Calu3 (cell line): ENCODE measurements at regions of chr4 and their contacts with region 1.

Region 1: GRCh38 chr4:40149960-40150385 is 46.9 kb upstream of the RHOH start:
- DNase-seq: peak; percentile 57
- H3K4me3 Mint-ChIP-seq: no peak overlapping the region
- H3K27ac Mint-ChIP-seq: no peak overlapping the region
- H3K4me1 Mint-ChIP-seq: no peaks in the 10 kb centered on the region
- H3K27me3 Mint-ChIP-seq: no peaks in the 10 kb centered on the region
- CTCF ChIP-seq: peak; percentile 72

Region 2: DNA sequence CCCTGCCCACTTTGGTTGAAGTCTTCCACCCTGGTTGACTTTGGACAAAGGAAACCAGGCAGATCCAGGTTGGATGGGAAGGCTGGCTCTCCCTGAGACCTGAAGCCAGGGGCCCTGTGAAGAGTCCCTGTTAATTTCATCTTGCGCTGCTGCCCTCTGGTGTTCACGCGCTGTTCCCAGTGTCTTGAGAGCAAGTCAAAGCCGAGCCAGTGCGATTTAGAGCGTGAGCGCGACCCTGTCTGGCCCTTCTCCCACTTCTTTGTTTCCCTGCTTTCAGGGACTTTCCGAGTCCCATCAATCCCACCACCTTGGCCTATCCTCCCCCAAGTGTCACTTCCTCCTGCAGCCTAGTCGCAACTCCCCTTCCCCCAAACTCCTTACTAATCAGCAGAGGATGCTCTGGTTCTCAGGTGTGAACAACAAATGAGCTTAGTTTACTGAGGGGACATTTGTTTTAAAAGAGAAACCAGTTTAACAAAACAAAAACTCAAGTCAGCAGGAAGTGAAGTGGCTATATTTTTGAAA is 159.3 kb after region 1 on chr4:
- CTCF ChIA-PET with region 1: no interaction called
- intact Hi-C with region 1: loop called (anchors 1 kb)
- DNase-seq: peak; percentile 84
- H3K4me3 Mint-ChIP-seq: peak overlapping the region; percentile 63
- H3K27ac Mint-ChIP-seq: no peak overlapping the region
- H3K4me1 Mint-ChIP-seq: peaks cover 11% of the 10 kb centered on the region
- H3K27me3 Mint-ChIP-seq: no peaks in the 10 kb centered on the region
- CTCF ChIP-seq: peak; percentile 49